Caco-2 (cell line): ENCODE measurements at regions of chr7 and their contacts with region 1.

Region 1: GRCh38 chr7:141715794-141716689 is 7.9 kb downstream of the WEE2 start:
- DNase-seq: no peak
- H3K4me3 ChIP-seq: peak overlapping the region; percentile 24
- H3K4me3 Mint-ChIP-seq: peak overlapping the region; percentile 18
- H3K27ac Mint-ChIP-seq: no peak overlapping the region
- H3K4me1 ChIP-seq: peaks cover 34% of the 10 kb centered on the region
- H3K4me1 Mint-ChIP-seq: peaks cover 14% of the 10 kb centered on the region
- H3K27me3 ChIP-seq: no peaks in the 10 kb centered on the region
- H3K27me3 Mint-ChIP-seq: no peaks in the 10 kb centered on the region
- CTCF ChIP-seq: no peak

Region 2: DNA sequence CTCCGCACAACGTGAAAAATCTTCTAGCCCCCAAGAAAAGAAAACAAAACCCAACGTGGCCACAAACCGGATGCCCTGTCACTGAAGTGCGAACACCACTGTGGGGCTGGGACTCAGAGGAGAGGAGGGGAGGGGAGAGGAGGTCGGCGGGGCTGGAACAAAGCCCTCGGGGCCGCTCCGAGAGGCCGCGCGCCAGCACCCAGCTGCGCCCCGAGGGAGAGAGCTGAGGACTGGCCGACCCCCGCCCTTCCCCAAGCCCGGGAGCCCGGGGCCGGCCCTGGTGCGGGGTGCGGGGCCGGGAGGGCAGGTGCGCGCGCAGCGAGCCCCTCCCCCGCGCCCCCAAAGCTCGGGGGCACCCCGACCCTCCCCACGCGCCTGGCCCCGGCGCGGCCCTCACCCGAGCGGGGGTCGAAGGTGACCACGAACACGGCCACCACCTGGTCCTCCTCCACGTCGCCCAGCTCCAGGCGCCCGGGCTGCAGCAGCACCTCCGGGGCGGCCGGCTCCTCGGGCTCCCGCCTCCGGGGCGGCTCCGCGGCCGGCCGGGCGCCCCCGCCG is 14.5 kb before region 1 on chr7:
- CTCF ChIA-PET with region 1: interaction called, 3 read pairs
- POLR2A ChIA-PET with region 1: interaction called, 6 read pairs
- intact Hi-C with region 1: loop called (anchors 1 kb)
- DNase-seq: peak; percentile 59 to 60
- H3K4me3 ChIP-seq: peak overlapping the region; percentile 84
- H3K4me3 Mint-ChIP-seq: peak overlapping the region; percentile 60
- H3K27ac Mint-ChIP-seq: no peak overlapping the region
- H3K4me1 ChIP-seq: peaks cover 46% of the 10 kb centered on the region
- H3K4me1 Mint-ChIP-seq: peaks cover 28% of the 10 kb centered on the region
- H3K27me3 ChIP-seq: no peaks in the 10 kb centered on the region
- H3K27me3 Mint-ChIP-seq: no peaks in the 10 kb centered on the region
- CTCF ChIP-seq: no peak